Kidney (tissue), 22 donors: ENCODE measurements at regions of chr12 and their contacts with region 1.

Region 1: GRCh38 chr12:49121047-49121696 is 10.0 kb downstream of the TUBA1B start:
- DNase-seq: peak in 3 of 5 donors; percentile 24 to 80 (median 57)
- H3K4me3 ChIP-seq: no peak overlapping the region
- H3K27ac ChIP-seq: no peak overlapping the region
- H3K4me1 ChIP-seq: no peaks in the 10 kb centered on the region
- H3K27me3 ChIP-seq: no peaks in the 10 kb centered on the region
- CTCF ChIP-seq: peak; percentile 64

Region 2: DNA sequence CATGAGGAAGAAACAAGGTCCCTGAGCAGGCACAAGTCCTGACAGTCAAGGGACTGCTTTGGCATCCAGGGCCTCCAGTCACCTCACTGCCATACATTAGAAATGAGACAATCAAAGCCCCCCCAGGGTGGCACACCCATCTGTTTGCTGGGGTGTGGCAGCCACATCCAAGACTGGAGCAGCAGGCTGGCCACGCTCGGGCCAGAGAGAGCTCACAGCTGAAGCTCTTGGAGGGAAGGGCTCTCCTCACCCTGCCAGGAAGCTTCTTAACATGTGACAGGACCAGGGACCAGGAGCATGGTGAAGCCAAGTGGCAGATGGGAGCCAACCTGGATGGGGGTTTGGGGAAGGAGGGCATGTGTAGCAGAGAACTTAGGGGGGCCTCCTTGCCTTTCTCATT is 292.9 kb before region 1 on chr12:
- intact Hi-C with region 1: no loop called
- DNase-seq: no peak
- H3K4me3 ChIP-seq: no peak overlapping the region
- H3K27ac ChIP-seq: no peak overlapping the region
- H3K4me1 ChIP-seq: no peaks in the 10 kb centered on the region
- H3K27me3 ChIP-seq: no peaks in the 10 kb centered on the region
- CTCF ChIP-seq: no peak

Region 3: GRCh38 chr12:49069507-49070346 is 51.4 kb before region 1 on chr12 and contains the start of gene RHEBL1:
- intact Hi-C with region 1: loop called (anchors 10 kb)
- DNase-seq: peak; percentile 98 to 99 (median 98)
- H3K4me3 ChIP-seq: peak within 1 kb of the TSS; percentile 72 to 96 (median 84)
- H3K27ac ChIP-seq: peak within 1 kb of the TSS; percentile 16 to 67
- H3K4me1 ChIP-seq: peaks cover 3 to 10% (median 4%) of the 10 kb centered on the region in 3 donors
- H3K27me3 ChIP-seq: no peaks in the 10 kb centered on the region
- CTCF ChIP-seq: no peak
- total RNA-seq, gene RHEBL1: 0.69 TPM